Esophagus muscularis mucosa (tissue), 4 donors: ENCODE measurements at regions of chr14 and their contacts with region 1.

Region 1: GRCh38 chr14:83463500-83464098 is 1929.9 kb upstream of the SEL1L start:
- DNase-seq: no peak
- H3K4me3 ChIP-seq: no peak overlapping the region
- H3K27ac ChIP-seq: no peak overlapping the region
- H3K4me1 ChIP-seq: no peaks in the 10 kb centered on the region
- H3K27me3 ChIP-seq: no peaks in the 10 kb centered on the region
- CTCF ChIP-seq: peak; percentile 45 to 53 (median 50)
- EP300 ChIP-seq: no peak
- POLR2A ChIP-seq: no peak

Region 2: DNA sequence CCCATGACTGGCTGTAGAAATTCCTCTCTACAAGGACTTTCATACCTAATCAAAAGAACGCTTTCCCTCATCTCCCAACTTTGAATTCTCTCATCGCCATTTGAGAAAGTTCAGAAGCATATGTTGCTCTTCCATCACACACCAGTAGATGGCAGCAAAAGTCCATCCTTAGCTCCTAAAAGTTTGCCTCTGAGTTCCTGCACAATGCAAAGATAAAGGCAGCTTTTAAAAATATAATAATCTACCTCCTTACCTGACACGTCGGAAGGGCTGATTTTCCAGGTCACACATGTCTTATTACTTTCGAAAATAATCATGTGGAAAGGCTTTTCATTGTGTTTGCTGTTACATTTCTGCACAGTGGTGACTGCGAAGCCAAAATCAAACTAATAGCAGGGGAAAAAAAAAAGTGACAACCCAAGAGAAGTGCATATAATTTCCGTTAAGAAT is 1473.3 kb before region 1 on chr14:
- intact Hi-C with region 1: loop called (anchors 5 kb)
- DNase-seq: no peak
- H3K4me3 ChIP-seq: no peak overlapping the region
- H3K27ac ChIP-seq: no peak overlapping the region
- H3K4me1 ChIP-seq: no peaks in the 10 kb centered on the region
- H3K27me3 ChIP-seq: peaks cover 0 to 5% (median 0%) of the 10 kb centered on the region in 4 donors
- CTCF ChIP-seq: peak; percentile 82 to 94 (median 89)
- EP300 ChIP-seq: no peak
- POLR2A ChIP-seq: no peak